Dorsolateral prefrontal cortex (tissue), 120 donors: ENCODE measurements at regions of chr1 and their contacts with region 1.

Region 1: GRCh38 chr1:89820422-89821321 is at the start of gene LRRC8D:
- DNase-seq: peak; percentile 80 to 97 (median 90)
- H3K4me3 ChIP-seq: peak within 1 kb of the TSS; percentile 56 to 98 (median 91)
- H3K27ac ChIP-seq: peak within 1 kb of the TSS; percentile 73 to 97 (median 91)
- H3K27me3 ChIP-seq: no peaks in the 10 kb centered on the region
- CTCF ChIP-seq: peak in 30 of 56 donors; percentile 8 to 56 (median 28)
- total RNA-seq, gene LRRC8D: 24.3 to 104 (median 44.2) TPM

Region 2: GRCh38 chr1:89794406-89794805 is 26.3 kb before region 1 on chr1:
- intact Hi-C with region 1: no loop called
- DNase-seq: no peak
- H3K4me3 ChIP-seq: no peak overlapping the region
- H3K27ac ChIP-seq: no peak overlapping the region
- H3K27me3 ChIP-seq: no peaks in the 10 kb centered on the region
- CTCF ChIP-seq: no peak

Region 3: DNA sequence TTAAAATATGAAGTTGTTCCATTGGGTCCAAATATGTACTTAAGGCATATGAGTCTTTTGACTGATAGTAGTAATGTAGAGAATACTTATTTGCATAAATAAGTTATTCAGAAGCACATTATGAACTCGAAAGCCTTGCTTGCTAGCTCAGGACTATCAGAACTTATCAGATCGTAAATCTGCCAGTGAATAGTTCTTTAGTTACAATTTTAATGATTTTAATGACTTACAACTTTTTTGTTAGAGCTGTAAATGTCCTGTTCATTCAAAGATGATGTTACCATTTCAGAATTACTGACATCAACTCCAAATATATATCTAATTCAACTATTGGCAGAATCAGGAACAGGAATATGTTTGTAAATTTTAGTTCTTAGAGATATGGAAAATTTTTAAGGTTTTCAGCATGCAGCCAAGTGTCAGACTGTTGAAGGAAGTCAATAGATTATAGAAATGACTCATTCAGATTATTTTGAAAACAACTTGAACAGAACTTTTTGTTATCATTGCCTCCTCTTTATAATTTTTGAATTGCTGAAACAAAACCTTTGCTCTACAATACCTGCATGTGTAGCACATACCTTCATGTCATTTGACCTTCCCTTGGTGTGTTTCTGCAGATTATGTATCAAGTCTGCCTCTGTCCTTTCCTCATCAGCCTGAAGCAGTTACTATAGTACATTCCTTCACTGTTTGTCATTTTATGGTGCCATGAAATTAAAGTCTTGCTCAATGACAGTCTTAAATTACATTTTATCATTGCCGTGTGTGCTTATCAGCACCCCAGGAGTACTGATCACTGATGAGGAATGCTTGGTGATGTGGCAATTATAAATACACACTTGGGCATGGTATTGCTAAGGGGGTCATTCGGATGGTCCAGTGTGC is 45.1 kb after region 1 on chr1:
- intact Hi-C with region 1: no loop called
- DNase-seq: no peak
- H3K4me3 ChIP-seq: no peak overlapping the region
- H3K27ac ChIP-seq: peak overlapping the region in 23 of 59 donors; percentile 0 to 71 (median 24)
- H3K27me3 ChIP-seq: no peaks in the 10 kb centered on the region
- CTCF ChIP-seq: no peak

Region 4: DNA sequence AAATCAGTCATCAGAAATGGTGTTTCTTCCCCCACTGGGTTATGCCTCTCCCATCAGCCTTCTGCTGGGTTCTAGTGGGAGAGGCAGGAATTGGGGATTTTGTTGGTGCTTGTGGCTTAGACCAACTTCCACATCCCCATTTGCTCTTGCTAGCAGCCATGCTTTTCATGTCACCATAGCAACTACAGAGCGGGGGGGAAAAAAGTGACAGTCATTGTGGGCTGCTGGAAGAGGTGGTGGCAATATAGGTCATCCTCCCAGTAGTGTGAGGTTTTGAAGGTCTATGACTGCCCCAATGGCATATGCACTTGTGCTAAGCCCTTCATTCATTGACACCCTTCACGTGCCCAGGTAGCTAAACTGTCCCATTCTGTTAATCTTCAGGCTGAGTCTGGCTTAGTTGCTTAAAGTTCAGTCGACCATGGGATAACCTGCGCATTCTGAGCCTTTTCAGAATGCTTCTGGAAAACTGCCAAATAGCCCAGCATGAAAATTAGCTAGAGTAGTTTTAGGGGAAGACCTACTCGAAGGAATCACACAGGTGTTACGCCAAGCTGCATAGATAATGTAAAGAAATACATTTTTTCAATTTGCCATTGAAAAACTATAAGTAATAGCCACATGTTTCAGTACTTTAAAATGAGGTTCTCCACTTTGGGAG is 120.6 kb after region 1 on chr1:
- intact Hi-C with region 1: loop called in 1 of 2 experiments (anchors 5 kb)
- DNase-seq: no peak
- H3K4me3 ChIP-seq: no peak overlapping the region
- H3K27ac ChIP-seq: peak overlapping the region in 57 of 59 donors; percentile 58 to 97 (median 91)
- H3K27me3 ChIP-seq: no peaks in the 10 kb centered on the region
- CTCF ChIP-seq: no peak

Region 5: GRCh38 chr1:89978755-89979154 is 158.1 kb after region 1 on chr1:
- intact Hi-C with region 1: no loop called
- DNase-seq: no peak
- H3K4me3 ChIP-seq: no peak overlapping the region
- H3K27ac ChIP-seq: no peak overlapping the region
- H3K27me3 ChIP-seq: no peaks in the 10 kb centered on the region
- CTCF ChIP-seq: no peak